ENCODE measurements at regions of chr1 and their contacts with region 1.

Region 1: GRCh38 chr1:161132410-161133219 is at the start of gene DEDD:
- DNase-seq: peak; percentile 92 to 95 (median 93)
- H3K4me3 ChIP-seq: peak within 1 kb of the TSS; percentile 80 to 100
- H3K4me3 Mint-ChIP-seq: peak within 1 kb of the TSS in 1 of 8 donors; percentile 91
- H3K27ac ChIP-seq: peak within 1 kb of the TSS; percentile 95
- H3K27ac Mint-ChIP-seq: peak within 1 kb of the TSS in 3 of 7 donors; percentile 91 to 99 (median 95)
- H3K4me1 ChIP-seq: peaks cover 51% of the 10 kb centered on the region
- H3K4me1 Mint-ChIP-seq: peaks cover 29 to 43% (median 40%) of the 10 kb centered on the region in 4 donors
- H3K27me3 ChIP-seq: no peaks in the 10 kb centered on the region
- H3K27me3 Mint-ChIP-seq: no peaks in the 10 kb centered on the region
- total RNA-seq, gene DEDD: 39.1 to 41.4 TPM

Region 2: DNA sequence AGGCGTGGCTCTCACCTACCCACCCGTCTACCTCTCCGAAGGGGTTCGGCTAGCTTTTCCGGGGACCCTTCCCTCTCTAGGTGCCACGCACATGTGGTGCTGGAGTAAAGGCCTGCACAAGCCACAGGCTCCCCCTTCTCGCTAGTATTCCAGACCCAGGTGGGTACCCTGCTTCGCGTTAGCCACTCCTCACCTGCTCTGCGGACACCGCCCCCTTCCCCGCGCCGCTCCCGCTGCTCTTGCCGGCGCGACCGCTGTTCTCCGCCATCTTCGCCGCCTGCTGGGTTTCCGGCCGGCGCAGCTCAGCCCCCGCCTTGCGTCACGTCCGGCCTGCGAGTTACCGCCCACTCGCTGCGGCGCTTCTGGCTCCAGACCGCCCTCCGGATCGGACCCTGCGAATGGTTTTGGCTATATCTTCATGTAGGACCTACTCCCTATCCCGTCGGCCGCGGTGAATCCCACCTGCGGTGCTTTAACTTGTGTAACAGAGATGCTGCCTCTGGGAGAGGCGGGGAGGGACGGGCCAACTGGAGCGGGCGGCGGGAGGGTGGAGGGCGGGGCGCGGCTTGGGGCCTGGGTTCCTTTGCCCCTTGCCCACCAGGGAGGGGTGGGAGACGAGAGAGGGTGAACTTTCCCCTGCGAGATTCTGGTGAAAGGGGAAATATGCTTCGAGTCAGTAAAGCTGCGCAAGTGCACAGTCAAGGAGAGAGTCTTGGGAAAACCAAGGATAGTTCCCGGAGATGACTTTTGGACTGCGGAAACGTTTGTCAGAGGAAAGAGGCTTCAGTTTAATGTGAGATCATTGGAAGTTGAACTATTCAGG is 14.6 kb before region 1 on chr1 and contains the starts of genes NIT1 and PFDN2:
- CTCF ChIA-PET with region 1: interaction called, 5 read pairs
- POLR2A ChIA-PET with region 1: interaction called, 47 read pairs
- intact Hi-C with region 1: loop called (anchors 1 kb)
- DNase-seq: peak; percentile 83 to 87 (median 86)
- H3K4me3 ChIP-seq: peak within 1 kb of the TSS; percentile 32 to 95
- H3K4me3 Mint-ChIP-seq: peak within 1 kb of the TSS; percentile 94 to 98 (median 96)
- H3K27ac ChIP-seq: peak within 1 kb of the TSS; percentile 94
- H3K27ac Mint-ChIP-seq: peak within 1 kb of the TSS; percentile 94 to 99 (median 98)
- H3K4me1 ChIP-seq: peaks cover 64% of the 10 kb centered on the region
- H3K4me1 Mint-ChIP-seq: peaks cover 36 to 79% (median 61%) of the 10 kb centered on the region in 4 donors
- H3K27me3 ChIP-seq: no peaks in the 10 kb centered on the region
- H3K27me3 Mint-ChIP-seq: no peaks in the 10 kb centered on the region
- total RNA-seq, gene NIT1: 49.0 to 50.5 TPM
- total RNA-seq, gene PFDN2: 40.8 to 41.0 TPM

Measured in CD4-positive, alpha-beta memory T cell (primary cell).